ENCODE measurements at regions of chr4 and their contacts with region 1.

Region 1: DNA sequence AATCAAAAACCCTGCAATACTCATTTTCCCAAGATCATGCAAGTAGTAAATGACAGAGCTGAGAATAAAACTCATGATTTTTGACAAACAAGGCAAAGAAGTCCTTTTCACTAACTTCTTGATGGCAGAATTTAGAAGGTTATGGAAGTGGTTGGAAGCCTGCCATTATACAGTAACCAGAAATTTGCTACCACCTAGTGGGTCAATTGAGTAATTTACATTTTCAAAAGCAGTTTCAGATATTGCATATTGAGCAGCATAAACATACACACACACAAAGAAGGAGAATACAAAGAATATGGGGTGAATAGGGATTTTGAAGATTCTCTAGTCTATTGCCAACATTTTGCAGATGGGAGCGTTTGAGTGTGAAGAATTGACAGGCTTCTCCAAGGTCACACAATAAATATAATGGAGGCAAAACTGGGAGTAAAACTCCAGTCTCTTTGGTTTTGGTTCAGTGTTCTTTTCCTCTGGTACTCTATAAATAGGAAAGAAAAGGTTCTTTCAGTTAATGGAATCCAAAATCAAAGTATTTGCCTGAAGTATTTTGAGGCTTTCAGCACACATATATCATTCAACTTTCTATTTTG is 70.2 kb downstream of the GC start:
- DNase-seq: no peak
- ATAC-seq: no peak
- H3K4me3 Mint-ChIP-seq: no peak overlapping the region
- H3K27ac Mint-ChIP-seq: no peak overlapping the region
- H3K4me1 Mint-ChIP-seq: no peaks in the 10 kb centered on the region
- H3K27me3 Mint-ChIP-seq: peaks cover 2% of the 10 kb centered on the region

Region 2: GRCh38 chr4:70601422-70602039 is 1112.2 kb before region 1 on chr4:
- CTCF ChIA-PET with region 1: no interaction called
- POLR2A ChIA-PET with region 1: no interaction called
- intact Hi-C with region 1: loop called (anchors 1 to 5 kb)
- DNase-seq: peak; percentile 79
- ATAC-seq: peak; percentile 92
- H3K4me3 Mint-ChIP-seq: no peak overlapping the region
- H3K27ac Mint-ChIP-seq: no peak overlapping the region
- H3K4me1 Mint-ChIP-seq: no peaks in the 10 kb centered on the region
- H3K27me3 Mint-ChIP-seq: peaks cover 2% of the 10 kb centered on the region

Region 3: DNA sequence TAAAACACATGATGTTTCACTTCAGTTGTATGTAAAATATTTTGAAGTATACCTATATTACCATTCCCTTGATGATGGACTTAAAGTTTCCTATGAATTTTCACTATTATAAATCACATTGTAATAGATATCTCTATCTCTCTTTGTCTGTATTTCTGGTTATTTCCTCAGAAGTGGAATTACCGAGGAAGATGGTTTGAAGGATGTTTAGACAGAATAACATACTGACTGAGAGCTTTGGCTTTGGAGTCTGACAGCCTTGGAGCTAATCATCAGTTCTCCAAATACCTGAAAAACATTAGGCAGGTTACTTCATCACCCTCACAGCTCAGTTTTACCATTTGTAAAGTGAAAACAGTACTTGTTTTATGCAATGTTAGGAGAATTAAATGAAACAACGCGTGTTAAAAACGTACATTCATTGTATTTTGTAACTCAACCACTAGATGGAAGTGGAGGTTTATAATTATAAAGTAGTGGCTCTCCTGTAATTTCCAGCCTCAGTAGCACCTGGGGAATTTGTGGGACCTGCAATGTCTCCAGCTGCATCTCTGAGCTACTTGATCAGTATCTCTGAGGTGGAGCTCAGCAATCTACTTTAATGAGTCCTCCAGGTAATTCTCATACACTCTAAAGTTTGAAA is 1061.7 kb before region 1 on chr4:
- CTCF ChIA-PET with region 1: no interaction called
- POLR2A ChIA-PET with region 1: no interaction called
- intact Hi-C with region 1: loop called in 1 of 2 experiments (anchors 1 kb)
- DNase-seq: no peak
- ATAC-seq: peak; percentile 39
- H3K4me3 Mint-ChIP-seq: no peak overlapping the region
- H3K27ac Mint-ChIP-seq: no peak overlapping the region
- H3K4me1 Mint-ChIP-seq: no peaks in the 10 kb centered on the region
- H3K27me3 Mint-ChIP-seq: peaks cover 3% of the 10 kb centered on the region

Region 4: GRCh38 chr4:71270901-71271300 is 442.8 kb before region 1 on chr4:
- CTCF ChIA-PET with region 1: interaction called, 3 read pairs
- POLR2A ChIA-PET with region 1: no interaction called
- intact Hi-C with region 1: loop called in 1 of 2 experiments (anchors 2 kb)
- DNase-seq: peak; percentile 55
- ATAC-seq: no peak
- H3K4me3 Mint-ChIP-seq: no peak overlapping the region
- H3K27ac Mint-ChIP-seq: no peak overlapping the region
- H3K4me1 Mint-ChIP-seq: peaks cover 9% of the 10 kb centered on the region
- H3K27me3 Mint-ChIP-seq: peaks cover 4% of the 10 kb centered on the region

Region 5: GRCh38 chr4:71616153-71616811 is 97.4 kb before region 1 on chr4:
- CTCF ChIA-PET with region 1: no interaction called
- POLR2A ChIA-PET with region 1: no interaction called
- intact Hi-C with region 1: no loop called
- DNase-seq: no peak
- ATAC-seq: no peak
- H3K4me3 Mint-ChIP-seq: no peak overlapping the region
- H3K27ac Mint-ChIP-seq: no peak overlapping the region
- H3K4me1 Mint-ChIP-seq: no peaks in the 10 kb centered on the region
- H3K27me3 Mint-ChIP-seq: peaks cover under 1% of the 10 kb centered on the region

Measured in activated CD4-positive, alpha-beta T cell treated with anti-CD3 and anti-CD28 coated beads for 36 hours (primary cell).